ENCODE measurements at regions of chr7 and their contacts with region 1.

Region 1: GRCh38 chr7:139075031-139075652 is 34.4 kb downstream of the ZC3HAV1 start:
- DNase-seq: peak; percentile 78 to 88 (median 82)
- H3K4me3 ChIP-seq: peak overlapping the region in 1 of 7 experiments; percentile 28
- H3K27ac ChIP-seq: no peak overlapping the region
- H3K4me1 ChIP-seq: peaks cover 10 to 43% (median 20%) of the 10 kb centered on the region in 4 experiments
- H3K27me3 ChIP-seq: no peaks in the 10 kb centered on the region

Region 2: DNA sequence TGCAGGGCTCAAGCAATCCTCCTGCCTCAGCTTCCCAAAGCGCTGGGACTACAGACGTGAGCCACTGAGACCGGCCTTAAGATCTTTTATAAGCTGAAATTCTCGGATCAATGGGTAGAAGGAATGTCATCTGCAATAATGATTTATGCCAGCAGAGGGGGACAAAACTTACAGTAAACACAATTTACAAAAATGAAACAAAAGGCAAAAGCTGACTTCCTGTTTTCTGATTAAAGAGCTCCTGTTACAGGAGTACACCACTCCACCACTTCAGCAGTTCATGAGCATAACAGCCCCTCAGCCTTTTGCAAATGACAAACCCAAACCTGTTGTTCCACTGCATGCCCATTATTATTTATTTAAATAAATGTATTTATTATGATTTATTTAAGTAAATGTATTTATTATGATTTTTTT is 188.6 kb before region 1 on chr7:
- CTCF ChIA-PET with region 1: interaction called, 10 read pairs
- POLR2A ChIA-PET with region 1: no interaction called
- DNase-seq: peak; percentile 81 to 90 (median 89)
- H3K4me3 ChIP-seq: peak overlapping the region in 1 of 7 experiments; percentile 9
- H3K27ac ChIP-seq: no peak overlapping the region
- H3K4me1 ChIP-seq: no peaks in the 10 kb centered on the region
- H3K27me3 ChIP-seq: no peaks in the 10 kb centered on the region

Region 3: DNA sequence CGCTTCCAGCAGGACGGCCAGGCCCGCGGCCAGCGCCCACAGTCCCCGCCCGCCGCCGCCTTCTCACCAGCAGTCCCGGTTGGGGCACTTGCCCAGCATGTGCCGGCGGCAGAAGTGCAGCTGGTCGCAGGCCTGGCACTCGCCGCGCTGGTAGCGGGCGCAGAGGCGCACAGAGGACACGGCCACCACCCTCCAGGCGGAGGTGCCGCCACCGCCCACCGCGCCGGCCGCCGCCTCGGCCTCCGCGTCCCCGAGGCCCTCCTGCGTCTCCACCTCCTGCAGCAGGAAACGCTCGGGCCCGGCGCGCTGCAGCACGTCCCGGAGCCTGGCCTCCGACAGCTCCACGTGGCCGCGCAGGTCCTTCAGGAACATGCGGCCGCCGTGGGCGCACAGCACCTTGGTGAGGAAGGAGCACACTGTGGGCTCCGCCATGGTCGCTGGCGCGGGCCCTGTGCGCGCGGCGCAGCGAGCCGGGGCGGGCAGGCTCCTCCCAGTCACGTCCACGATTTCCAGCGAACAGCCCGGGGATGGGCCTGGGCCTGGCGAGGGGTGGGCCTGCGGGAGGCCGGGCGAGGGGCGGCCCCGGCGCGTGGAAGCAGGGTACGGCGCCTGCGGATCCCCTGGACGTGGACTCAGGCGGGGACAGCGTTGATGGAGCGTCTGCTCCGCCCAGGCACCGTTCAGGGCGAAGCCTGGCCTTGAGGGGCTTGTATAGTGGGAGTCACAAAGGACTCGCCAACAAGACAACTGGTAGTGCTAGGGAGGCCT is 39.4 kb before region 1 on chr7 and contains the start of gene ZC3HAV1L:
- CTCF ChIA-PET with region 1: interaction called, 11 read pairs
- POLR2A ChIA-PET with region 1: interaction called, 3 read pairs
- DNase-seq: peak; percentile 66 to 86 (median 79)
- H3K4me3 ChIP-seq: peak within 1 kb of the TSS; percentile 44 to 86 (median 79)
- H3K27ac ChIP-seq: peak within 1 kb of the TSS; percentile 40 to 43
- H3K4me1 ChIP-seq: peaks cover 0 to 28% (median 16%) of the 10 kb centered on the region in 4 experiments
- H3K27me3 ChIP-seq: no peaks in the 10 kb centered on the region

Region 4: DNA sequence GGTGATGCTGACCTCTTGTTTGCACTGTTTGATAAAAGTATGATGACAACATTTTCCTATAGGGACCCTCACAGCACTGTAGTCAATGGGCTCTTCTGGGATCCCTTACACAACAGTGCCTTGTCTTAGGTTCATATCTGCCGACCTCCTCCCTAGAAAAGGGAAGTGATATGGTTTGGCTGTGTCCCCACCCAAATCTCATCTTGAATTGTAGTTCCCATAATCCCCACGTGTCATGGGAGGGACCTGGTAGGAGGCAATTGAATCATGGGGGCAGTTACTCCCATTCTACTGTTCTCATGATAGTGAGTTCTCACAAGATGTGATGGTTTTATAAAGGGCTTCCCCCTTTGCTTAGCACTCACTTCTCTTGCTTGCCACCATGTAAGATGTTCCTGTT is 11.3 kb after region 1 on chr7:
- CTCF ChIA-PET with region 1: interaction called, 11 read pairs
- POLR2A ChIA-PET with region 1: no interaction called
- DNase-seq: no peak
- H3K4me3 ChIP-seq: no peak overlapping the region
- H3K27ac ChIP-seq: no peak overlapping the region
- H3K4me1 ChIP-seq: peaks cover 0 to 16% (median 4%) of the 10 kb centered on the region in 4 experiments
- H3K27me3 ChIP-seq: no peaks in the 10 kb centered on the region

Region 5: GRCh38 chr7:139127648-139128047 is 52.5 kb after region 1 on chr7:
- CTCF ChIA-PET with region 1: interaction called, 16 read pairs
- POLR2A ChIA-PET with region 1: no interaction called
- DNase-seq: no peak
- H3K4me3 ChIP-seq: no peak overlapping the region
- H3K27ac ChIP-seq: no peak overlapping the region
- H3K4me1 ChIP-seq: peaks cover 0 to 12% (median 5%) of the 10 kb centered on the region in 4 experiments
- H3K27me3 ChIP-seq: no peaks in the 10 kb centered on the region

Region 6: DNA sequence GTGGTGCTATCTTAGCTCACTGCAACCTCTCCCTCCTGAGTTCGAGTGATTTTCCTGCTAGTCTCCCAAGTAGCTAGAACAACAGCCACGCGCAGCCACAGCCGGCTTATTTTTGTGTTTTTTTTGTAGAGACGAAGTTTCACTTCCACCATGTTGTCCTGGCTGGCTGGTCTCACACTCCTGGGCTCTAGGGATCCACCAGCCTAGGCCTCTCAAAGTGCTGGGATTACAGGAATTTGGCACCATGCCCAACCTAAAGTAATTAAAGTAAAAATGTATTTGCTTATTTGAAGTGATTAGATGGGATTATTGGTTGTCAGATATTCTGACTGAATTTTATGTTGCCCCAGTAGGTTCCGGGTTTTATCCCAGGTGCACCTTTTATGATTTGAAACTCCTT is 307.3 kb after region 1 on chr7:
- CTCF ChIA-PET with region 1: no interaction called
- POLR2A ChIA-PET with region 1: no interaction called
- DNase-seq: no peak
- H3K4me3 ChIP-seq: no peak overlapping the region
- H3K27ac ChIP-seq: no peak overlapping the region
- H3K4me1 ChIP-seq: peaks cover 0 to 2% (median 0%) of the 10 kb centered on the region in 4 experiments
- H3K27me3 ChIP-seq: no peaks in the 10 kb centered on the region